K562 (cell line): ENCODE measurements at regions of chr19 and their contacts with region 1.

Region 1: GRCh38 chr19:13952154-13953035 is at the start of gene DCAF15:
- DNase-seq: peak; percentile 99 to 100 (median 100)
- ATAC-seq: peak; percentile 99
- H3K4me3 ChIP-seq: peak within 1 kb of the TSS; percentile 98
- H3K27ac ChIP-seq: peak within 1 kb of the TSS; percentile 89
- H3K4me1 ChIP-seq: peaks cover 7 to 42% of the 10 kb centered on the region in 2 experiments; a peak in 4 of 5 replicates
- H3K27me3 ChIP-seq: no peaks in the 10 kb centered on the region
- CTCF ChIP-seq: no peak
- EP300 ChIP-seq: no peak
- POLR2A ChIP-seq: peak; percentile 90
- RAD21 ChIP-seq: no peak
- polyA plus RNA-seq, gene DCAF15: 0.17 to 0.56 TPM

Region 2: DNA sequence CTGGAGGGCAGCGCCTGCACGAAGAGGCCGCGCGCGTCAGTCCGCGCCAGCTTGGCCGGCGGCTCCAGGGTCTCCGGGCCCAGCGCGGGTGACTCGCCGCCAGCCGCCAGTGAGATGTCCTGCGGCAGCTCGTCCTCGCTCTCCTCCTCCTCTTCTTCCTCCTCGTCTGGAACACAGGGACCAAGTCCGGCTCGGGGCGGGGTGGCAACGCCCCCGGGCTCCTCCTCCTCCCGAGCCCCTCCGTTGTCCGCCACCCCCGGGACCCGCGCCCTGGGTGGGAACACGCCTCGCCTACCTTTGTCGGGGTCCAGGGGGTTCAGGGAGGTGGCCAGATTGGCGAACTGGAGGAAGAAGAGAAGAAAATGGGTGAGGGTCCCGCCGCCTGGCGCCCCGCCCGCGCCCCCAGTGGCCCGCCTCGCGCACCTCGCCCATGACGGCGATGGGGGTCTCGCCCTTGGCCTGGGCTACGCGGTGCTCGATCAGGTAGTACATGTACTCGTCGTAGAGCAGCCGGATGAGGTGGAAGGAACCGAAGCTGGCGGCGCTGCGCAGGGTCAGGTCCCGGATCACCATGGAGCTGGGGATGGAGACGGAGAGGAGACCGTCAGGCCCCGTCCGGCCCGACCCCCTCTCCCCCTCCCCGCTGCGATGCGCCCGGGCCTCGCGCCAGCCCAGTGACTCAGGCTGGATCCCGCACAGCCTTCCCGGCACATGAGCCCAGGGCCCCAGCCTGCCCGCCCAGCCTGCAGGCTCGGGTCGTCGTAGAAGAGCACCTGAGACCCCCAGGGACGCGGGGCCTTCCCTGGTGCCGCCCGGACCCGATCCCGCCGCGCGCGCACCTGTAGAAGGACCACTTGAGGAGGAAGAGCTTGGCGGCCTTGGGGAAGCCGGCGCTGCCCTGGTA is 10.6 kb after region 1 on chr19:
- CTCF ChIA-PET with region 1: no interaction called
- POLR2A ChIA-PET with region 1: interaction called, 12 read pairs
- in situ Hi-C with region 1: no loop called
- intact Hi-C with region 1: no loop called
- DNase-seq: no peak
- ATAC-seq: no peak
- H3K4me3 ChIP-seq: no peak overlapping the region
- H3K27ac ChIP-seq: no peak overlapping the region
- H3K4me1 ChIP-seq: peaks cover 5 to 49% of the 10 kb centered on the region in 2 experiments; a peak in 4 of 5 replicates
- H3K27me3 ChIP-seq: no peaks in the 10 kb centered on the region
- CTCF ChIP-seq: no peak
- EP300 ChIP-seq: no peak
- POLR2A ChIP-seq: no peak
- RAD21 ChIP-seq: no peak

Region 3: GRCh38 chr19:14006243-14006765 is 53.9 kb after region 1 on chr19 and contains the start of gene RFX1:
- CTCF ChIA-PET with region 1: no interaction called
- POLR2A ChIA-PET with region 1: interaction called, 10 read pairs
- in situ Hi-C with region 1: no loop called
- intact Hi-C with region 1: loop called (anchors 2 kb)
- DNase-seq: peak; percentile 75 to 98 (median 84)
- ATAC-seq: peak; percentile 86
- H3K4me3 ChIP-seq: peak within 1 kb of the TSS; percentile 82
- H3K27ac ChIP-seq: peak within 1 kb of the TSS; percentile 100
- H3K4me1 ChIP-seq: peaks cover 45 to 46% of the 10 kb centered on the region in 2 experiments
- H3K27me3 ChIP-seq: no peaks in the 10 kb centered on the region
- CTCF ChIP-seq: no peak
- EP300 ChIP-seq: no peak
- POLR2A ChIP-seq: no peak
- RAD21 ChIP-seq: no peak
- polyA plus RNA-seq, gene RFX1: 0.14 to 0.25 TPM

Region 4: DNA sequence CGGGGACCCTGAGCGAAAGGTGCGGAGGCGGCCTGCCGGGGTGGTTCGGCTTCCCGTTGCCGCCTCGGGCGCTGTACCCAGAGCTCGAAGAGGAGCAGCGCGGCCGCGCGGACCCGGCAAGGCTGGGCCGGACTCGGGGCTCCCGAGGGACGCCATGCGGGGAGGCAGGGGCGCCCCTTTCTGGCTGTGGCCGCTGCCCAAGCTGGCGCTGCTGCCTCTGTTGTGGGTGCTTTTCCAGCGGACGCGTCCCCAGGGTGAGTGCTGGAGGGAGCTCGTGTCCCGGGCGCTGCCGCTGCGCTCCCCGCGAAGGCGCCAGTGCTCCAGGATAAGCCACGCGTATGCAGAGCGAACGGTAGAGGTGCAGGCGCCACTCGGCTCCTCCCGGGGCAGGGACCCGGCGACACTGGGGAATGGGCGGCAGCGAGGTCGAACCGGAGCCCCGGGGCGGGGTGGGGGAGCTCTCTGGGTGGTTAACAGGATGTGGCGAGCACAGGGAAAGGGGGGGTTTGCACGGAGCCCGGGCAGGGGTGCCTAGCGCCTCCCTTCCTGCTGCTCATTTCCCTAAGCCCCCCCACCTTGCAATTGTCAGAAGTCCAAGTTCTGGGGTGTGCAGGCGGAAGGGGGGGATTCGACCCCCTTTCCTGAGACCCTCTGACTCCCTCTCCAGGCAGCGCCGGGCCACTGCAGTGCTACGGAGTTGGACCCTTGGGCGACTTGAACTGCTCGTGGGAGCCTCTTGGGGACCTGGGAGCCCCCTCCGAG is 79.5 kb after region 1 on chr19 and contains the start of gene IL27RA:
- CTCF ChIA-PET with region 1: no interaction called
- POLR2A ChIA-PET with region 1: no interaction called
- in situ Hi-C with region 1: no loop called
- intact Hi-C with region 1: loop called (anchors 10 kb)
- DNase-seq: peak; percentile 79 to 88 (median 82)
- ATAC-seq: peak; percentile 83
- H3K4me3 ChIP-seq: peak within 1 kb of the TSS; percentile 56
- H3K27ac ChIP-seq: peak within 1 kb of the TSS; percentile 81
- H3K4me1 ChIP-seq: peaks cover 20 to 47% of the 10 kb centered on the region in 2 experiments; a peak in 4 of 5 replicates
- H3K27me3 ChIP-seq: no peaks in the 10 kb centered on the region
- CTCF ChIP-seq: peak; percentile 80 to 91 (median 84)
- EP300 ChIP-seq: no peak
- POLR2A ChIP-seq: peak; percentile 78
- RAD21 ChIP-seq: peak; percentile 74 to 76
- polyA plus RNA-seq, gene IL27RA: 1.9 to 2.1 TPM

Region 5: GRCh38 chr19:14136509-14137281 is 184.3 kb after region 1 on chr19 and contains the start of gene ASF1B:
- CTCF ChIA-PET with region 1: no interaction called
- POLR2A ChIA-PET with region 1: no interaction called
- in situ Hi-C with region 1: no loop called
- intact Hi-C with region 1: no loop called
- DNase-seq: peak; percentile 96 to 99 (median 97)
- ATAC-seq: peak; percentile 93
- H3K4me3 ChIP-seq: peak within 1 kb of the TSS; percentile 84
- H3K27ac ChIP-seq: peak within 1 kb of the TSS; percentile 94
- H3K4me1 ChIP-seq: peaks cover 12 to 48% of the 10 kb centered on the region in 2 experiments; a peak in 4 of 5 replicates
- H3K27me3 ChIP-seq: no peaks in the 10 kb centered on the region
- CTCF ChIP-seq: peak; percentile 91 to 98 (median 94)
- EP300 ChIP-seq: no peak
- POLR2A ChIP-seq: peak; percentile 95
- RAD21 ChIP-seq: peak; percentile 87 to 95
- polyA plus RNA-seq, gene ASF1B: 6.0 to 8.0 TPM